GM12878 (cell line): ENCODE measurements at regions of chr10 and their contacts with region 1.

Region 1: DNA sequence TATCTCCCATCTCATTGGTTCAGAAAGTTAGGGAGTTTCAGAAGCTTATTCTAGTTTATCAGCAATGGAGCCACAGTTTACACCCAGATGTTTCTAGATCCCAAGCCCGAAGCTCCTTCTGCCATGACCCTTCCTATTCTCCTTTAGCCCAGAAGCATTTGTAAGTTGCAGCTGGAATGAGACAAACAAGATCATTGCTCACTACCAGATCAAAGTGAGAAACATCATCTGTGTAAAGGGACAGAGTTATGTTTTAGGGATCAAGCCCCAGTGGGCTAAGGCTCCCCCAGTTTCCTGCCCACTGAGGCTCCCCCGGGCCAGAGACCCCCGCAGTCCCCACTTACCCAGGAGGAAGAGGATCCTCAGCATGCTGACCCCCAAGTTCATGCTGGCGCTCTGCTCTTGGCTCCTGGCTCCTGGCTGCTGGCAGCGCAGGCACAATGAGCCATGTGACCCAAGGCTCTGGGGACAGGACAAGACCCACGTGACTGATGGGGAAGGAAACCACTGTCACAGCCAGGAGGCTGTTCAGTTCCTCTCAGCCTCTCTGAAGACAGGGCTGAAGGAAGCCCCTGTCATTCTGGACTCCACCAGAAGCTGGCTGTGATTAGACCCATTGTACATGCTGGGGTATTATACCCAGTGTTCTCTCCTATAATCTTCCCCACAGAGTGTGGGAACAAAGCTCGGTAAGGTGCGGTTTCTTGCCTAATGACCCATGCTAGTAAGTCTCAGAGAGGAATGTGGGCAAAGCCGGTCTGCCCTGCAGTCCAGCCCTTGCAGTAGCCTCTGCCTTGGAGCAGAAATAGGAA is at the start of gene TMEM273:
- DNase-seq: peak; percentile 73
- ATAC-seq: peak; percentile 78
- H3K4me3 ChIP-seq: peak within 1 kb of the TSS; percentile 57; the same call in 1 of the 2 replicates
- H3K27ac ChIP-seq: peak within 1 kb of the TSS; percentile 26; the same call in 1 of the 2 replicates
- H3K4me1 ChIP-seq: peaks cover 37% of the 10 kb centered on the region
- H3K27me3 ChIP-seq: no peaks in the 10 kb centered on the region
- CTCF ChIP-seq: no peak
- EP300 ChIP-seq: no peak
- POLR2A ChIP-seq: peak; percentile 70
- RAD21 ChIP-seq: no peak
- polyA plus RNA-seq, gene TMEM273: 25.6 to 28.6 TPM

Region 2: DNA sequence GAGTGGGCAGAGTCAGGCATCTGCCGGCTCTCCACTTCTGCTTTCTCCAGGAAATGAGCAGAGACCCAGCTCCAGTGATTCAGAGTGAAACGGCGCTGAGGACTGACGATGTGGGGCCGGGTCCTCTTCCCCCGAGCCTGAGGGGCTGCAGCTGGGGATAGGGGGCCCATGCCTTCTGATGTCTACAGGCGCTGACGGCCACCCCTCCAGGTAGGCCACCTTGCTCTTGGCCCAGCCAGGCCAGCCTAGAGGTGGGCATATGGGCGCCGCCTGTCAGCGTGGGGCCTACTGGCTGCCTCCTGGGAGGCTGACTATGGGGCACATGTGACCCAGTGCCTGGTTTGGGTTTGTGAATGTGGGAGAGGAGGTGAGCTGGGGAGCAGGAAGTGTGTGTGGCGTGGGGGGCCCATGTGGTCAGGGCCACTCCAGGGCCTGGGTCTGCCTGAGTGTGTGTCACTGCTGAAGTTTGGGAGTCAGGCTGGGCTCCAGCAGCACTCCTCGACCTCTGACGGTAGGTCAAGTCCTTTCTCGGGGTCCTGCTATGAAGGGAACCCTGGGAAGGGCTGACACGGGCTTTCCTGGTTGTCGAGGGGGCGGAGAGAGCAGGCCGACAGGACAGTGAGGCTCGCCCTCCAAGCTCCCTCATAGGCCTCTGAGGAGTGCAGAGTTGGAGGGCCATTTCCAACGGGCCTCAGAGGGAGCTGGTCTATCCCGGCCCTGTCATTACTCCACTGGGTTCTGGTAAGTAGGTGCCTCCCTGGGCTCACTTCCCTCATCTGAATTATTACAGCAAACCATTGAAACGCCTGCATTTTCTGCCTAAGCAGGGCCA is 503.1 kb before region 1 on chr10 and contains the start of gene WDFY4:
- CTCF ChIA-PET with region 1: no interaction called
- POLR2A ChIA-PET with region 1: no interaction called
- RAD21 ChIA-PET with region 1: no interaction called
- SMC1A ChIA-PET with region 1: no interaction called
- in situ Hi-C with region 1: no loop called
- intact Hi-C with region 1: loop called (anchors 10 kb)
- DNase-seq: no peak
- ATAC-seq: peak; percentile 79
- H3K4me3 ChIP-seq: peak within 1 kb of the TSS; percentile 70
- H3K27ac ChIP-seq: peak within 1 kb of the TSS; percentile 96
- H3K4me1 ChIP-seq: peaks cover 28% of the 10 kb centered on the region
- H3K27me3 ChIP-seq: no peaks in the 10 kb centered on the region
- CTCF ChIP-seq: no peak
- EP300 ChIP-seq: no peak
- POLR2A ChIP-seq: peak; percentile 80; the same call in 1 of the 2 replicates
- RAD21 ChIP-seq: no peak
- polyA plus RNA-seq, gene WDFY4: 13.5 to 13.9 TPM

Region 3: DNA sequence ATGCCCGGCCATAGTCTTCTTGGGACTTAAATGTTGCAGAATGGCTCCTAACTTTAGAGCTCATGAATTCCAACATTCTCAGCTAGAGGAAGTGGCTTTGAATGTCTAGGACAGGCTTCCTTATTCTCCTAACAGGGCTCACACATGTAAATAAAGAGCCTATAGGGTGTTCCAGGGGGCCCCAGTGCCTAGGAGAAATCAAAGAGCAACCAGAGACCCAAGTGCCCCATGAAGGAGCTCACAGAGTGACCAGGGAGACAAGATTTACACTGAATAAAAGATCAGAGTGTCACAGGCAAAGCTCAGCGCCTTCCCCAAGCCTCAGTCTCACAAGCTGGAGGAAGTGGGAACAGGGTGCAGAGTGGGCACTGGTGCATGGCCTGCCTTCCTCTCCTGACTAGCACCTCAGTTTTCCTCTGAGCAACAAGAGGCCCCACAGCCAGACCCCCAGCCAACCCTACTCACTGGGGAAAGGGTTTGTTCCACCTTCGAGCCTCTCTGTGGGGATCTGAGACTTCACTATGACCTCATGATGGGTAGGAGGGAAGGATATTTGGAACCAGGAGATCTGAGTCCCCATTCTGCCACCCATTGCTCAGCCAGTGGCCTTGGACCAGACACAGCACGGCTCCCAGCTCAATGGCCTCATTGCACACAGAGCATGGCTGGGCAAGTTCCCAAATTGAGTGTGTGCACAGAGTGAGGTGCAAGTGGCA is 15.9 kb before region 1 on chr10:
- CTCF ChIA-PET with region 1: interaction called, 6 read pairs
- POLR2A ChIA-PET with region 1: interaction called, 38 read pairs
- RAD21 ChIA-PET with region 1: interaction called, 7 read pairs
- SMC1A ChIA-PET with region 1: interaction called, 30 read pairs
- in situ Hi-C with region 1: no loop called
- intact Hi-C with region 1: loop called (anchors 1 kb)
- DNase-seq: no peak
- ATAC-seq: peak; percentile 57
- H3K4me3 ChIP-seq: no peak overlapping the region
- H3K27ac ChIP-seq: 0 out of 2 replicates have a peak overlapping the region, but pooled peaks have one; percentile 7
- H3K4me1 ChIP-seq: peaks cover 29% of the 10 kb centered on the region
- H3K27me3 ChIP-seq: no peaks in the 10 kb centered on the region
- CTCF ChIP-seq: no peak
- EP300 ChIP-seq: no peak
- POLR2A ChIP-seq: no peak
- RAD21 ChIP-seq: no peak

Region 4: DNA sequence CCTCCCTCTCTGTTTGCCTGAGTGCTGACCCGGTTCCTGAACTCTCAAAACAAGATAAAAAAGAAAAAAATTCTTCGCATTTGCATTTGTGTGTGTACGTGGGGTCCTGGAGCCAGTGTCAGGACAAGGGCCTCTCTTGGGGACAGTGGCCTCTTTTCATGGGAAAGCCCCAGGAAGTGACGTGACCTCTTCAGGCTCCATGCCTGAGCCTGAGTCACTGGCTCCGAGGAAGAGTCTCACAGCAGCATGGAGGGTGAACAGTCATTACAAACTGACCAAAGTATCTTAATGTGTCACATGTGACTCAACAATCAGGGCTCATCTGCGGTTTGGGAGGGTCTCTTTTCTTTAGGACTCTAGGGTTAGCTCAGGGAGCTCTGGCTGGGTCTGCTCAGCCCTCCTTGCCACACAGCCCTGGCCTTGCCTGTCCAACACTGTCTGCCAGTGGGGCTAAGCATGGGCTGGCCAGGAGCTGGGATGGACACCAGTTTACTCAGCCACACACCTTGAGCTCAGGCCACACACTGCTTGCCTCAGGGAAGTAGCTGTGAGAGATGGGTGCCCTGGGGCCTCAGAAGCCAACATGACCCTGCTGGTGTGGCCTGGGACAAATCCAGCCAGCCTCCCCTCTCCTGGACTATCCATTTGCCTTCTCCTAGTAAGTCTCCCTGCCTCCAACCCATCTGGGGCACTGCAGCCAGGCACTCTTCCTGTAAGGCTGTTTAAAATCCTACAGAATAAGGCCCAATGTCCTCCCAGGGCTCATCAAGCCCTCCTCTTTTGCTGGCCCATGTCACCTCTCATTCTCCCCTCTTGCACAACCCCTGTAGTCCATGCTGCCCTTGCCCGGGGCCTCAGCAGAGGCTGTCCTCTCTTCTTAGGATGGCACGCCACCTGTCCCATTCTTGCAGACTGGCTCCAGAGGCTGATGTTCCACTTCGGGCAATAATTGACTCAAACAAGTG is 10.5 kb before region 1 on chr10:
- CTCF ChIA-PET with region 1: interaction called, 5 read pairs
- POLR2A ChIA-PET with region 1: interaction called, 38 read pairs
- RAD21 ChIA-PET with region 1: interaction called, 12 read pairs
- SMC1A ChIA-PET with region 1: interaction called, 30 read pairs
- in situ Hi-C with region 1: no loop called
- intact Hi-C with region 1: loop called (anchors 1 kb)
- DNase-seq: peak; percentile 85
- ATAC-seq: peak; percentile 85
- H3K4me3 ChIP-seq: no peak overlapping the region
- H3K27ac ChIP-seq: peak overlapping the region; percentile 87
- H3K4me1 ChIP-seq: peaks cover 51% of the 10 kb centered on the region
- H3K27me3 ChIP-seq: no peaks in the 10 kb centered on the region
- CTCF ChIP-seq: no peak
- EP300 ChIP-seq: peak; percentile 67 to 83
- POLR2A ChIP-seq: no peak
- RAD21 ChIP-seq: peak; percentile 21; the same call in 1 of the 2 replicates

Region 5: GRCh38 chr10:49362596-49363260 is 174.6 kb after region 1 on chr10:
- CTCF ChIA-PET with region 1: no interaction called
- POLR2A ChIA-PET with region 1: no interaction called
- RAD21 ChIA-PET with region 1: no interaction called
- SMC1A ChIA-PET with region 1: interaction called, 3 read pairs
- in situ Hi-C with region 1: no loop called
- intact Hi-C with region 1: loop called (anchors 2 kb)
- DNase-seq: peak; percentile 69
- ATAC-seq: peak; percentile 96
- H3K4me3 ChIP-seq: no peak overlapping the region
- H3K27ac ChIP-seq: no peak overlapping the region; the same call in 1 of the 2 replicates
- H3K4me1 ChIP-seq: peaks cover 16% of the 10 kb centered on the region
- H3K27me3 ChIP-seq: no peaks in the 10 kb centered on the region
- CTCF ChIP-seq: no peak
- EP300 ChIP-seq: peak in 1 of 2 experiments; percentile 88; a peak in 2 of 4 replicates
- POLR2A ChIP-seq: no peak
- RAD21 ChIP-seq: no peak